ENCODE measurements at regions of chr17 and their contacts with region 1.

Region 1: GRCh38 chr17:63425482-63425881 is 20.6 kb downstream of the CYB561 start:
- DNase-seq: peak; percentile 79
- H3K4me3 Mint-ChIP-seq: no peak overlapping the region
- H3K27ac Mint-ChIP-seq: no peak overlapping the region
- H3K4me1 Mint-ChIP-seq: peaks cover 33% of the 10 kb centered on the region
- H3K27me3 Mint-ChIP-seq: no peaks in the 10 kb centered on the region

Region 2: DNA sequence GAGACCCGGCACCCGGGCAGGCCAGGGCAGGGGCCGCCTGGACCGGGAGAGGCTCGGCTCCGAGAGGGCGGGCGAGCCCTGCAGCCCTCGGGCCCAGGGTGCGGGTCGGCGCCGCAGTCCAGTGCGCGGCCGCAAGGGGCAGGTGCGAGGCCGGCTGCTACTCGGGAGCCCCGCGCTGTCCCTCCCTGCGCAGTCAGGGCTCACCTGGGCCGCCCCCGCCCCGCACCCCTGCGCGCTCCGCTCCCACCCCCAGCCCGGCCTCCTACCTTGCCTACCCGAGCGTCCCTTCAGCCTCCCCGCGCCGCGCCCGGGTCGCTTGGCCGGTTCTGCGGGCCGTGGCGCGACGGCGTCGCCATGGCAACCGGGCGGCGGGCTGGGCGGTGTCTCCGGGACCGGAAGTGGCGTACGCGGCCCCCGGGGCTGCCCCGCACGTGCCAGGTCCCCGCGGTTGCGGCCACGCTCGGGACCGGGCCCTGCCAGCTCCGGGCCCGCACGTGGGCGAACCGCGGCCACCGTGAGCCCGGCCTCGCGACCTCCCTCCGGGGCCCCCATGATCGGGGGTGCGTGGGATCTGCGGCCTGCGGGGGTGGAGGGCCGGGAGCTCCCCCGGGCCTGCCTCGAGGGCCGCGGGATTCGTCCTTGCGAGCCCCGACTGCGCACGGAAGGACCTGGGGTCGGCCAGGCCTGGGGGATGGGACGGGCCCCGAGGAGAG is 20.7 kb after region 1 on chr17 and contains the start of gene CYB561:
- CTCF ChIA-PET with region 1: interaction called, 47 read pairs
- POLR2A ChIA-PET with region 1: no interaction called
- intact Hi-C with region 1: no loop called
- DNase-seq: peak; percentile 81
- H3K4me3 Mint-ChIP-seq: peak within 1 kb of the TSS; percentile 70
- H3K27ac Mint-ChIP-seq: peak within 1 kb of the TSS; percentile 89
- H3K4me1 Mint-ChIP-seq: peaks cover 38% of the 10 kb centered on the region
- H3K27me3 Mint-ChIP-seq: peaks cover 1% of the 10 kb centered on the region
- total RNA-seq, gene CYB561: 9.4 to 9.7 TPM

Region 3: DNA sequence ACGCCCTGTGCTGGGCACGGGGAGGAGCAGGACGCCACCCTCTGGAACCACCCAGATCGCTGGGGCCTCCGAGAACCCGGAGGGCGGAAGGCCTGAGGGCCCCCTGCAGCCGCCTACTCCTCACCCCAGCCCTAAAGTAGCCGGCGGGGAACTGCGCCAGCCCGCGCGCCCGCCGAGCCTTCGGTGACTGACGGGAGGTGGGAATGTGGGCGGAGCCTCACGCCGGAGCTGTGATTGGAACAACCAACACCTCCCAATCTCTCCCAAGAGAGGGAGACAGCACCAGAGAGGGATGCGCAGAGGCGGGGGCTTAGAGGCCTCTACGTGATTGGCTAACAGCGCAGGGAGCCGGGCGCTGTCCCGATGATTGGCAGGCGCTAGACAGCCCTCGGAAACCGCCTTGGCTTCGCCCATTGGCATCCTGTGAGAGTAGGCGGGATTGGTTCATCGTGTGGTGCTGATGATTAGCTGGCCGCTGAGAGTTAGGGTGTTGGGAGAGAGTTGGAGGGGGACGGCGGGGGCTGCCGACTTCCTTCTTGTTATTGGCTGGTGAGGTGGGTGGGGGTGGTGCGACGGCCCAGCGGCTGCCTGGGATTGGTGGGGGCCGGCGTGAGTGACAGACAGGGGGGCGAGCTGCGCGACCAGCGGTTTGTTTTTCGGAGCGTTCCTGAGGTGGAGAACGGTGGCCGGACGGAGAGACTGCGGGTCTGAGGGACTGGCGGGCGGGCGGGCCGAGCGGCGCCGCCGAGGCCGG is 196.5 kb after region 1 on chr17 and contains the start of gene MAP3K3:
- CTCF ChIA-PET with region 1: interaction called, 53 read pairs
- POLR2A ChIA-PET with region 1: interaction called, 4 read pairs
- intact Hi-C with region 1: no loop called
- DNase-seq: peak; percentile 99
- H3K4me3 Mint-ChIP-seq: peak within 1 kb of the TSS; percentile 99
- H3K27ac Mint-ChIP-seq: peak within 1 kb of the TSS; percentile 87
- H3K4me1 Mint-ChIP-seq: peaks cover 38% of the 10 kb centered on the region
- H3K27me3 Mint-ChIP-seq: no peaks in the 10 kb centered on the region
- total RNA-seq, gene MAP3K3: 32.8 to 34.0 TPM

Region 4: GRCh38 chr17:63709098-63709497 is 283.6 kb after region 1 on chr17:
- CTCF ChIA-PET with region 1: interaction called, 22 read pairs
- POLR2A ChIA-PET with region 1: no interaction called
- intact Hi-C with region 1: no loop called
- DNase-seq: no peak
- H3K4me3 Mint-ChIP-seq: no peak overlapping the region
- H3K27ac Mint-ChIP-seq: peak overlapping the region; percentile 49
- H3K4me1 Mint-ChIP-seq: peaks cover 54% of the 10 kb centered on the region
- H3K27me3 Mint-ChIP-seq: no peaks in the 10 kb centered on the region

Region 5: GRCh38 chr17:63834431-63835166 is 409.1 kb after region 1 on chr17:
- CTCF ChIA-PET with region 1: interaction called, 4 read pairs
- POLR2A ChIA-PET with region 1: no interaction called
- intact Hi-C with region 1: loop called (anchors 5 kb)
- DNase-seq: peak; percentile 82
- H3K4me3 Mint-ChIP-seq: no peak overlapping the region
- H3K27ac Mint-ChIP-seq: peak overlapping the region; percentile 72
- H3K4me1 Mint-ChIP-seq: peaks cover 47% of the 10 kb centered on the region
- H3K27me3 Mint-ChIP-seq: no peaks in the 10 kb centered on the region

Measured in activated CD4-positive, alpha-beta memory T cell treated with anti-CD3 and anti-CD28 coated beads for 36 hours (primary cell).